PC-9 (cell line): ENCODE measurements at regions of chr9 and their contacts with region 1.

Region 1: DNA sequence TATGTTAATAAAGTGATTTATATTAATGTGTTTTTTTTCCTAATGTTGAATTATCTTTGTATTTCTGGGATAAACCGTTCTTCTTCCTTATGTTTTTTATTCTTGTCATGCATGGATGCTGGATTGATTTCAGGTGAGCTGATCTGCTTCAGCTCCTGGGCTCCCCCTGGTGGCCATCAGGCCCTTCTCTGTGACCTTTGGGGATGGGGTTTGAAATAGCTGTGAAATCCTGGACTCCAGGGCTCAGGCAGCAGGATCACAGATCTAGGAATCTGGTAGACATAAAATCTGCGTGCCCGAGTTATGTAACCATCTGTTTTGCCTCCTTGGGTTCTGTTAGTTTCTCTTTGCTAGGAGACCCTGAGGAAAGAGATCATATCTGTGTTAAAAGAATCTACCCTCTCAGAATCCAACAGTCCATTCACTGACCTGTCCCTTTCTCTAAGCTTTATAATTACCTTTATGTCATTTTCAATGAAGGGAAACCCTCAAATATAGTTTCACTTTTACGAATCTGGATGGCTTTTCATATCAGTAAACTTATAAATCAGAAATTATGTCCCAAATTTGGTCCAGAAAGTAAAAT is 12.2 kb upstream of the OR13J1 start:
- DNase-seq: peak; percentile 49 to 70
- H3K4me3 ChIP-seq: no peak overlapping the region
- H3K27ac ChIP-seq: no peak overlapping the region
- H3K4me1 ChIP-seq: no peaks in the 10 kb centered on the region
- H3K27me3 ChIP-seq: no peaks in the 10 kb centered on the region
- CTCF ChIP-seq: peak; percentile 91

Region 2: GRCh38 chr9:35790385-35791296 is 91.7 kb before region 1 on chr9:
- CTCF ChIA-PET with region 1: interaction called, 13 read pairs
- POLR2A ChIA-PET with region 1: no interaction called
- intact Hi-C with region 1: loop called (anchors 1 kb)
- DNase-seq: peak in 1 of 2 experiments; percentile 34
- H3K4me3 ChIP-seq: no peak overlapping the region
- H3K27ac ChIP-seq: no peak overlapping the region
- H3K4me1 ChIP-seq: 0 out of 2 replicates have a peak, but pooled peaks cover 4% of the 10 kb centered on the region
- H3K27me3 ChIP-seq: no peaks in the 10 kb centered on the region
- CTCF ChIP-seq: peak; percentile 80

Region 3: DNA sequence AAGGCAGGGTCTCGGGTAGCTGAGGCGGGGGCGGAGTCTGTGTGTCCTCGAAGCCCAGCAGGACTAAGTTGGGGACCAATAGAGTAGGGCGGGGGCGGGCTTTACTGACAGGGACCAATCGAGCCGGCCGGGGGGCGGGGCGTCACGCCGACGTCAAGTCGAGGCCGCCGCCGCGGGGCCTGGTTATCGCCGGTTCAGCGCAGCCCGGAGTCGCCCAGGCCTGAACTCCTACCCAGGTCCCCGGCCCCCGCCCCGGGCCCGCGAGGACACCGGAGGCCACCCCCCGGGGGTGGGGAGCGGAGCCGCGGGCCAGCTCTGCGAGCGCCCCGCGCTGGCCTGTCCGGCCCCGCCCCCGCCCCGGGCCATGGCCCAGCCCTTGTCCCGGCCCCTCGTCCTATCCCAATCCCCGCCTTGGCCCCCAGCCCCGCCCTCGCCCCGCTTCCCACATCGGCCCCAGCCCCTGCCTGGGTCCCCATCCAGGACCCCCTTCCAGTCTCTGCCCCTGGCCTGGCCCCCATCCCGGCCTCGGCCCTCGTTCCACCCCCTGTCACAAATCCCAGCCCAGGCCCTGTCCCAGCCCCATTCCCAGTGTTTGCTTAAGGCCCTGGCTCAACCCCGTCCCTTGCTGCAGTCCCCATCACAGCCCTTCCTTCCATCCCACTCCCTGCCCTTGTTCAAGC is 53.1 kb before region 1 on chr9 and contains the start of gene TMEM8B:
- CTCF ChIA-PET with region 1: interaction called, 7 read pairs
- POLR2A ChIA-PET with region 1: no interaction called
- intact Hi-C with region 1: loop called (anchors 1 kb)
- DNase-seq: peak; percentile 63 to 78
- H3K4me3 ChIP-seq: peak within 1 kb of the TSS; percentile 71; the same call in 1 of the 2 replicates
- H3K27ac ChIP-seq: no peak within 1 kb of the TSS
- H3K4me1 ChIP-seq: peaks cover 12% of the 10 kb centered on the region
- H3K27me3 ChIP-seq: no peaks in the 10 kb centered on the region
- CTCF ChIP-seq: no peak
- total RNA-seq, gene TMEM8B: 6.3 and 6.4 TPM in 2 replicates

Region 4: GRCh38 chr9:35993976-35994720 is 111.8 kb after region 1 on chr9:
- CTCF ChIA-PET with region 1: interaction called, 10 read pairs
- POLR2A ChIA-PET with region 1: no interaction called
- intact Hi-C with region 1: no loop called
- DNase-seq: no peak
- H3K4me3 ChIP-seq: no peak overlapping the region
- H3K27ac ChIP-seq: no peak overlapping the region
- H3K4me1 ChIP-seq: no peaks in the 10 kb centered on the region
- H3K27me3 ChIP-seq: no peaks in the 10 kb centered on the region
- CTCF ChIP-seq: no peak